AG04449 (cell line): ENCODE measurements at regions of chr10 and their contacts with region 1.

Region 1: DNA sequence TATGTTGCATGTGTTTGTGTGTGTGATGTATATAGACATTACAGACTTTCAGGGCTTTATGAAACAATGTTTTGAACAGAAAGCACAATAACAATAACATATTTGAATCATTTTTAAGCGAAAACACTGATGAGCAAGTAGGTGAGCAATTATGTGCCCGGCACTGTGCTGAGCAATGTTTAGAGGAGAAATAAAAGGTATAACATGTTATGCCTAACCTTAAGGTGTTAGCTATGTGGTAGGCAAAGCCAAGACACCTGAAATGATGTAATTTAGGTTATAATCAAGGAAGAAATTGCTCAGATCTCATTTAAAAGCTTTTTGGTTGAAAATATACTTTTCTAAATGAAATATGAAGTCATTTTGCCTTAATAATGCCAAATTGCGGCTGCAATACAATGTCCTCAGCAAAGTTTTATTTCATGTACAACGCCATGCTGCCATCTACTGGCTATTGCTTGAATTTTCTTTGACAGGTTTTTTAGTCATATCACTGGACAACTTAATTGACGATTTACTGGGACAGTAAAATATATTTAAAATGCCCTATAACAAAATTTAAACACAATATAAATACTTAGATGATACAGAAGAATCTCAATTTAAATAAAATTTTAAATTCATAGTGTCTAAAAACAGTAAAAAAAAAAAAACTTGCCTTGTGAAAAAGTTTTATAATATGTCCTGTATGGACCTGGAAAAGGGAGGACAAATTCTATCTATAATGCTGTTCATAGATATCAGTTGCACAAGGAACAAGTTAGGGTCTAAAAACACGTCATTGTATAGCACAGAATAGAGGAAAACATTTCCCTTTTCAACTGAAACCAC is 131.1 kb upstream of the CDK1 start:
- DNase-seq: no peak
- H3K4me3 ChIP-seq: no peak overlapping the region
- CTCF ChIP-seq: peak; percentile 42

Region 2: GRCh38 chr10:60099998-60100747 is 547.0 kb before region 1 on chr10:
- CTCF ChIA-PET with region 1: interaction called, 15 read pairs
- POLR2A ChIA-PET with region 1: no interaction called
- DNase-seq: no peak
- H3K4me3 ChIP-seq: no peak overlapping the region
- CTCF ChIP-seq: peak; percentile 44

Region 3: DNA sequence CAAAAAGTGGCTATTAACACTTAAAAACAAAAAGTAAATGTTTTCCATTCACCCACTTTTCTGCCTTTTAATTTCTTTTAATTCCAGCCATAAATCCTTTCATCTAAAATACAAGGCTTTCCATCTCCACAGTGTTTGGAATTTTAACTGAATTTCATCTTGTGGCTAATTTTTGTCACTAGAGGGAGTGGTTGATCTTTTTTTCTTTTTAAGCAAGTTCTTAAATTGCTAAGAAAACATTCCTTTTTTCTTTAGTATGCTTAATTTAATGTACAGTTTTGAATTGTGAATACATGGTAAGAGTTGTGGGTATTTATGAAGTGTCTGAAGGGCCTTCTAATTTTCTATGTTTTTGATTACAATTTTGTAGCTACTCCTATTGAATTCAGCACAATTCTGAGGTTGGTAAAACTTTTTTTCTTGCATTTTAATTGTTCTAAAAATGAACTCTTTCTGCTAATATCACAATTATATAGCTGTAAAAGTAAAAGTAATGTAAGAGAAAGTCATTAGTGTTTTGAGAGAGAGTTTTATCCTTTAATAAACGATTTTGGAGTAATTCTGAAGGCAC is 202.6 kb before region 1 on chr10:
- CTCF ChIA-PET with region 1: interaction called, 471 read pairs
- POLR2A ChIA-PET with region 1: no interaction called
- DNase-seq: no peak
- H3K4me3 ChIP-seq: no peak overlapping the region
- CTCF ChIP-seq: peak; percentile 25

Region 4: GRCh38 chr10:60461688-60462087 is 185.5 kb before region 1 on chr10:
- CTCF ChIA-PET with region 1: interaction called, 13 read pairs
- POLR2A ChIA-PET with region 1: no interaction called
- DNase-seq: no peak
- H3K4me3 ChIP-seq: no peak overlapping the region
- CTCF ChIP-seq: no peak

Region 5: GRCh38 chr10:60662917-60663614 is 15.9 kb after region 1 on chr10:
- CTCF ChIA-PET with region 1: interaction called, 21 read pairs
- POLR2A ChIA-PET with region 1: no interaction called
- DNase-seq: no peak
- H3K4me3 ChIP-seq: no peak overlapping the region
- CTCF ChIP-seq: no peak